ENCODE measurements at regions of chr11 and their contacts with region 1.

Region 1: DNA sequence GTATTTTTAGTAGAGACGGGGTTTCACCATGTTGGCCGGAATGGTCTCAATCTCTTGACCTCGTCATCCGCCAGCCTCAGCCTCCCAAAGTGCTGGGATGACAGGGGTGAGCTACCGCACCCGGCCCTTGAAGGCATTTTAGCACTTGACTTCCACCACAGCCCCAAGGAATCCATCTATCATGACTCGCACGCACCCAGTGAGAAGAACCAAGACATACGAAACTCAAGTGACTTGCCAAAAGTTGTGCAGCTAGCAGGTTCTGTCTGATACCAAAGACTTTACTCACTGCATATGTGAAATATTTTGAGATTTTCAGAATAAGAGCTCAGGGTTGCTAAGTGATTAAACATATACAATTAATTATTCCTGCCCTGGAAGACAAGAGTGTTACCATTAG is 21.0 kb downstream of the FLI1 start:
- DNase-seq: peak; percentile 45
- ATAC-seq: no peak
- H3K4me3 Mint-ChIP-seq: no peak overlapping the region
- H3K27ac Mint-ChIP-seq: peak overlapping the region; percentile 73
- H3K4me1 Mint-ChIP-seq: peaks cover 97% of the 10 kb centered on the region
- H3K27me3 Mint-ChIP-seq: no peaks in the 10 kb centered on the region

Region 2: GRCh38 chr11:128701086-128701485 is 13.8 kb before region 1 on chr11:
- CTCF ChIA-PET with region 1: interaction called, 6 read pairs
- POLR2A ChIA-PET with region 1: interaction called, 7 read pairs
- intact Hi-C with region 1: loop called (anchors 1 kb)
- DNase-seq: no peak
- ATAC-seq: no peak
- H3K4me3 Mint-ChIP-seq: no peak overlapping the region
- H3K27ac Mint-ChIP-seq: peak overlapping the region; percentile 72
- H3K4me1 Mint-ChIP-seq: peaks cover 93% of the 10 kb centered on the region
- H3K27me3 Mint-ChIP-seq: no peaks in the 10 kb centered on the region

Region 3: GRCh38 chr11:128725630-128726319 is 10.9 kb after region 1 on chr11:
- CTCF ChIA-PET with region 1: interaction called, 10 read pairs
- POLR2A ChIA-PET with region 1: no interaction called
- intact Hi-C with region 1: loop called in 1 of 2 experiments (anchors 1 kb)
- DNase-seq: peak; percentile 65
- ATAC-seq: peak; percentile 53
- H3K4me3 Mint-ChIP-seq: peak overlapping the region; percentile 66
- H3K27ac Mint-ChIP-seq: peak overlapping the region; percentile 87
- H3K4me1 Mint-ChIP-seq: peaks cover 98% of the 10 kb centered on the region
- H3K27me3 Mint-ChIP-seq: no peaks in the 10 kb centered on the region

Region 4: GRCh38 chr11:128784059-128784804 is 69.4 kb after region 1 on chr11:
- CTCF ChIA-PET with region 1: no interaction called
- POLR2A ChIA-PET with region 1: no interaction called
- intact Hi-C with region 1: no loop called
- DNase-seq: no peak
- ATAC-seq: no peak
- H3K4me3 Mint-ChIP-seq: no peak overlapping the region
- H3K27ac Mint-ChIP-seq: no peak overlapping the region
- H3K4me1 Mint-ChIP-seq: peaks cover 27% of the 10 kb centered on the region
- H3K27me3 Mint-ChIP-seq: no peaks in the 10 kb centered on the region

Region 5: GRCh38 chr11:129131316-129131715 is 416.4 kb after region 1 on chr11:
- CTCF ChIA-PET with region 1: no interaction called
- POLR2A ChIA-PET with region 1: no interaction called
- intact Hi-C with region 1: no loop called
- DNase-seq: no peak
- ATAC-seq: no peak
- H3K4me3 Mint-ChIP-seq: no peak overlapping the region
- H3K27ac Mint-ChIP-seq: no peak overlapping the region
- H3K4me1 Mint-ChIP-seq: no peaks in the 10 kb centered on the region
- H3K27me3 Mint-ChIP-seq: no peaks in the 10 kb centered on the region

Region 6: GRCh38 chr11:129611661-129612446 is 897.0 kb after region 1 on chr11:
- CTCF ChIA-PET with region 1: no interaction called
- POLR2A ChIA-PET with region 1: no interaction called
- intact Hi-C with region 1: no loop called
- DNase-seq: peak; percentile 19
- ATAC-seq: no peak
- H3K4me3 Mint-ChIP-seq: no peak overlapping the region
- H3K27ac Mint-ChIP-seq: no peak overlapping the region
- H3K4me1 Mint-ChIP-seq: no peaks in the 10 kb centered on the region
- H3K27me3 Mint-ChIP-seq: no peaks in the 10 kb centered on the region

Measured in activated CD4-positive, alpha-beta T cell treated with anti-CD3 and anti-CD28 coated beads for 36 hours (primary cell).